Activated B cell treated with CpG ODN at 0.5 μM for 24 hours (primary cell): ENCODE measurements at regions of chr6 and their contacts with region 1.

Region 1: DNA sequence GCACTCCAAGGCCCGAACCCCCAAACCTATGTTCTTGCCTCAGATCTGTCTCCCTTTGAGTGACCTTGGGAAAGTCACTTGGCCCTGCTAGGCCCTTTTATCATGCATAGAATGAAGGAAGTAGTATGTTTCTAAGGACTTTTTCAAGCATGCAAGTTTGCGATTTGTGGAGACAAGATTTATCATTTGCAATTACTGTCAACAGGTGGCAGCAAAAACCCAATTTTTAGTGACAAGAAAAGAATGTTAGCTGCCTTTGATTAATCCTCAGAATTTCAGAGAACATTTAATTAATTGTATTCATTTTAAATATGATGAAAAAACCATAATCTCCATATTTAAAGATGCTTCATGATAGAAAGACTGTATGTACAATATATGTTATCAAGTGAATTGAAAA is 28.3 kb upstream of the PREP start:
- DNase-seq: no peak
- ATAC-seq: no peak
- H3K4me3 Mint-ChIP-seq: no peak overlapping the region
- H3K27ac Mint-ChIP-seq: no peak overlapping the region
- H3K4me1 Mint-ChIP-seq: no peaks in the 10 kb centered on the region
- H3K27me3 Mint-ChIP-seq: peaks cover 8% of the 10 kb centered on the region
- CTCF ChIP-seq: no peak

Region 2: DNA sequence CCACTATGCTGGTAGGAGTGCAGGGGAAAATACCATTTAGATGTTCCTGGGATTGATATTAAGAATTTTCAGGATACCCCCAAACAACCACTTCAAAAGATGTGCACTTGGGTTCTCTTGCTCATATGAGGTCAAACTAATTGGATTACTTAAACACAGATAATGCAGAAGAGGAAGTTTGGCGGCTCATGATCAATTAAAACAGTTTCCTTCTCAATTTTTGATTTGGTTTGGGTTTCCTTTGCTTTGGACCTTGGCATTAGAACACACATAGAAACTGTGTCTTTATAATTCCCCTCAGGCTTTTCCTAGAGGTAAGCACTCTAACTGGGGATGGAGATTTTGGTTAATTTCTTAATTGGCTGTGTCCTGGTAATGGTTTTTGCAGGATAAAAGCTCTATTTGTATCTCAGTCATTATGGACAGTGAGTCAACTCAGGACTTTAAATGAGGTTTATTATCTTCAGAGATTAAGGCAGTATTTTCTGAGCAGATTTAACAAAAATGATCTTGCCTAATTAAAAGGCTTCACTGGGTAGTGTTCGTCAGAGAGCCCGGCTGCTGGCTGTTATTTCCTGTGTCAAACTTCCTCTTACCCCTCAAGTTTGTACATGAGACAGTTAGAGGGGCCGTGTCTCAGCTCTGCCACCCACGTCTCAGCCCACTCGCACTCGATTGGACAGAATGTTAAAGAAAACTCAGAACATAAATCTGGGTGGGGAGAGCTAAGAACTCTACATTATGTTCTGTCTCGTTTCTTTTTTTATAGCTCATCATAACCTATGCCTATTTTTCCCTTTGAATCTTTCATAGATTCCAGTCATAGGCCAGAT is 21.9 kb after region 1 on chr6:
- CTCF ChIA-PET with region 1: interaction called, 13 read pairs
- POLR2A ChIA-PET with region 1: no interaction called
- intact Hi-C with region 1: no loop called
- DNase-seq: no peak
- ATAC-seq: peak; percentile 86
- H3K4me3 Mint-ChIP-seq: peak overlapping the region; percentile 61
- H3K27ac Mint-ChIP-seq: peak overlapping the region; percentile 68
- H3K4me1 Mint-ChIP-seq: peaks cover 16% of the 10 kb centered on the region
- H3K27me3 Mint-ChIP-seq: peaks cover 5% of the 10 kb centered on the region
- CTCF ChIP-seq: no peak

Region 3: GRCh38 chr6:105733565-105734162 is 302.4 kb after region 1 on chr6:
- CTCF ChIA-PET with region 1: interaction called, 6 read pairs
- POLR2A ChIA-PET with region 1: no interaction called
- intact Hi-C with region 1: loop called (anchors 2 kb)
- DNase-seq: no peak
- ATAC-seq: no peak
- H3K4me3 Mint-ChIP-seq: no peak overlapping the region
- H3K27ac Mint-ChIP-seq: no peak overlapping the region
- H3K4me1 Mint-ChIP-seq: no peaks in the 10 kb centered on the region
- H3K27me3 Mint-ChIP-seq: no peaks in the 10 kb centered on the region
- CTCF ChIP-seq: peak; percentile 39

Region 4: GRCh38 chr6:106568530-106568929 is 1137.3 kb after region 1 on chr6:
- CTCF ChIA-PET with region 1: no interaction called
- POLR2A ChIA-PET with region 1: no interaction called
- intact Hi-C with region 1: loop called (anchors 5 kb)
- DNase-seq: no peak
- ATAC-seq: no peak
- H3K4me3 Mint-ChIP-seq: no peak overlapping the region
- H3K27ac Mint-ChIP-seq: peak overlapping the region; percentile 41
- H3K4me1 Mint-ChIP-seq: peaks cover 5% of the 10 kb centered on the region
- H3K27me3 Mint-ChIP-seq: no peaks in the 10 kb centered on the region
- CTCF ChIP-seq: no peak